Naive thymus-derived CD4-positive, alpha-beta T cell (primary cell): ENCODE measurements at regions of chr1 and their contacts with region 1.

Region 1: GRCh38 chr1:116377541-116378529 is 4.8 kb downstream of the ATP1A1 start:
- DNase-seq: peak in 8 of 9 donors; percentile 40 to 64 (median 56)
- ATAC-seq: peak; percentile 62
- H3K4me3 ChIP-seq: peak overlapping the region; percentile 94
- H3K4me3 Mint-ChIP-seq: peak overlapping the region; percentile 86 to 99 (median 96)
- H3K27ac ChIP-seq: peak overlapping the region; percentile 98
- H3K27ac Mint-ChIP-seq: peak overlapping the region; percentile 82 to 98 (median 94)
- H3K4me1 ChIP-seq: peaks cover 38 to 59% of the 10 kb centered on the region in 2 donors
- H3K4me1 Mint-ChIP-seq: peaks cover 46 to 86% (median 79%) of the 10 kb centered on the region in 7 donors
- H3K27me3 ChIP-seq: no peaks in the 10 kb centered on the region
- H3K27me3 Mint-ChIP-seq: no peaks in the 10 kb centered on the region

Region 2: DNA sequence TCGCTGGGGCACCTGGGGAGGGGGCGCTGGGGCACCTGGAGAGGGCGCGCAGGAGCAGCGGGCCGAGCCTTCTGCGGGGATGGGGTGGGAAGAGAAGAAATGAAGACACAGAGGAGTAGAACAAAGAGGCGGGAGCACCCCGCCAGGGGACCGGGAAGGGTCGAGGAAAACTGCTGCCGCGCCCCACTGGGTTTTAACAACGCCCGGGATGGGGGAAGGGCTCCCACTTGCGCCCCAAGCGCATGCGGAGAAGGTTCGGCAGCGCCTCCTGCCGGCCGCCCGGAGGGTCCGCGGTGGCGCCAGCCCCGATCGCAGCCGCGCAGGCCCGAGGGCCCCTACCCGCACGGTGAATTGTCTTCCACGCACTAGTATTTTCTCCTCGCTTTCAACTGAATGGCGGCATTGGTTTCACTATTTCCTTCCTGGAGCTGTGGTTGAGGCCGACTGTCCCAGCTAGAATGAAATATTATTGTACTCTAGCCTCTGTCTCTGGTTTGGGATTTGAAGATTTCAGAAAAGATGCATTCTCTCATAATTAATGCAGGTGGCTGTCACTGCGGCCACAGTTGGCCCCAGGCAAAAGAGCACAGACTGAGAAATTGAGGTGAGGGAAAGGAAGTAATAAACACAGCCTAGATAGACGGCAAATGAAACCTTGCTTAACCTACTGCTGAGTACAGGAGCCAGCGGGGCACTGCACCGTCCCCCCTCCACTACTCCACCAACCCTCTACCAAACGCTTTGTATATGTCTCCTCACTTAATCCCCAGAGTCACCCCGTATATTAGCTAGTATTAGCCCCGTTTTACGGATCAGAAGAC is 209.3 kb before region 1 on chr1:
- CTCF ChIA-PET with region 1: no interaction called
- POLR2A ChIA-PET with region 1: no interaction called
- intact Hi-C with region 1: loop called in 1 of 2 experiments (anchors 2 kb)
- DNase-seq: peak; percentile 74 to 88 (median 83)
- ATAC-seq: peak; percentile 97
- H3K4me3 ChIP-seq: peak overlapping the region; percentile 75
- H3K4me3 Mint-ChIP-seq: peak overlapping the region; percentile 70 to 90 (median 88)
- H3K27ac ChIP-seq: peak overlapping the region; percentile 60
- H3K27ac Mint-ChIP-seq: peak overlapping the region; percentile 81 to 96 (median 92)
- H3K4me1 ChIP-seq: peaks cover 9% of the 10 kb centered on the region in 2 donors
- H3K4me1 Mint-ChIP-seq: peaks cover 14 to 23% (median 19%) of the 10 kb centered on the region in 7 donors
- H3K27me3 ChIP-seq: no peaks in the 10 kb centered on the region
- H3K27me3 Mint-ChIP-seq: peaks cover 0 to 14% (median 0%) of the 10 kb centered on the region in 5 donors

Region 3: DNA sequence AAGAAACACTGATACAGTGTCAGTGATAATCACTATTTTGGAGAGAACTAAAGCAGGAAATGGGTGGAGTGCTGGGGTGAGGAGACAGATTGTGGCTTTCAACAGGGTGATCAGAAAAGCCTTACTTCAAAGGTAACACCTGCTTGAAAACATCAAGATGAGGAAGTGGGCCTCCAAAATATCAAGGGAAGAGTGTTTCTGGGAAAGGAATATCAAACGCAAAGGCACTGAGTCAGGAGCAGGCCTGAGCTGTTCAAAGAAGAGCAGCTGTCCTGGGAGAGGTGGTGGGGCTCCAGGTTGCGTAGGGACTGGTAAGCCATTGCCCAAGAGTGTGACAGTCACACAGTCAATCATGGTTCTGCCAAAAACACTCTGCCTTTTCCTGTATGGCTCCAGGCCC is 51.9 kb before region 1 on chr1:
- CTCF ChIA-PET with region 1: interaction called, 4 read pairs
- POLR2A ChIA-PET with region 1: interaction called, 103 read pairs
- intact Hi-C with region 1: loop called (anchors 1 kb)
- DNase-seq: peak; percentile 14 to 84 (median 78)
- ATAC-seq: peak; percentile 92
- H3K4me3 ChIP-seq: peak overlapping the region; percentile 38
- H3K4me3 Mint-ChIP-seq: peak overlapping the region; percentile 25 to 83 (median 70)
- H3K27ac ChIP-seq: peak overlapping the region; percentile 73
- H3K27ac Mint-ChIP-seq: peak overlapping the region; percentile 90 to 98 (median 95)
- H3K4me1 ChIP-seq: peaks cover 48 to 88% of the 10 kb centered on the region in 2 donors
- H3K4me1 Mint-ChIP-seq: peaks cover 50 to 100% (median 93%) of the 10 kb centered on the region in 7 donors
- H3K27me3 ChIP-seq: no peaks in the 10 kb centered on the region
- H3K27me3 Mint-ChIP-seq: no peaks in the 10 kb centered on the region

Region 4: DNA sequence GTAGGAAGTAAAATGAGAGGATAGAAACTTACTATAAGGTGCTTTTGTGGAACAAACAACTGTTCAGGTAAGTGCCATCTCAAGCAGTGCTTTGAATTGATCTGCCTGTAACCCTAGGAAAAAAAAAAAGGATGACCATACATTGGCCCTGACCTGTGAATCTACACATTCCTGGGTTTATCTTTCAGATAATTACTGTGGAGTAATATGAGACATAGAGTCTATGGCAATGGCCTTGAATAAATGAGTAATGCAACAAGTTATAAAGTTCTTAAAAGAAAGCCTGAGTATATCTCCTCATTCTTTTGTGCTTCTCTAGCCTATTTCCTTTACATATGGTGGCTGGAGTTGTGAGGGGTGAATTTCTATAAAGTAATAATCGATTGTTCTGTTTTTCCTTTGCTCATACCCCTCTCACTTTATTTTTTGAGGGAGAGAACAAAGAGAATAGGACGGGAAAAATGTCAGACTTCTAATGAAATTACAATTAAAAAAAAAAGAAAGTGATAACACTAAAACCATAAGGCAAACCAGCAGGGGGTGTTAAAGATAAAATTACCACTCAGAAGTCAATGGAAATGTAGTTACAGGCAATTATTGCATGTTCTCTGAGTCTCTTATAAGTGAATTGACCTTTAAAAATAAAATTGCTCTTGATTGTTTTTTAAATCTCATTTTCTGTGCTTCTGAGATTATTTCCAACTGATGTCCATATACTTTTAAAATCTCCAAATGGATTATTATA is 17.2 kb before region 1 on chr1:
- CTCF ChIA-PET with region 1: interaction called, 5 read pairs
- POLR2A ChIA-PET with region 1: interaction called, 13 read pairs
- intact Hi-C with region 1: loop called in 1 of 2 experiments (anchors 1 kb)
- DNase-seq: peak in 3 of 9 donors; percentile 7 to 30 (median 15)
- ATAC-seq: no peak
- H3K4me3 ChIP-seq: no peak overlapping the region
- H3K4me3 Mint-ChIP-seq: no peak overlapping the region
- H3K27ac ChIP-seq: no peak overlapping the region
- H3K27ac Mint-ChIP-seq: peak overlapping the region in 1 of 9 donors; percentile 63
- H3K4me1 ChIP-seq: peaks cover 0 to 13% of the 10 kb centered on the region in 2 donors
- H3K4me1 Mint-ChIP-seq: peaks cover 4 to 55% (median 33%) of the 10 kb centered on the region in 7 donors
- H3K27me3 ChIP-seq: no peaks in the 10 kb centered on the region
- H3K27me3 Mint-ChIP-seq: peaks cover 0 to 24% (median 0%) of the 10 kb centered on the region in 5 donors

Region 5: DNA sequence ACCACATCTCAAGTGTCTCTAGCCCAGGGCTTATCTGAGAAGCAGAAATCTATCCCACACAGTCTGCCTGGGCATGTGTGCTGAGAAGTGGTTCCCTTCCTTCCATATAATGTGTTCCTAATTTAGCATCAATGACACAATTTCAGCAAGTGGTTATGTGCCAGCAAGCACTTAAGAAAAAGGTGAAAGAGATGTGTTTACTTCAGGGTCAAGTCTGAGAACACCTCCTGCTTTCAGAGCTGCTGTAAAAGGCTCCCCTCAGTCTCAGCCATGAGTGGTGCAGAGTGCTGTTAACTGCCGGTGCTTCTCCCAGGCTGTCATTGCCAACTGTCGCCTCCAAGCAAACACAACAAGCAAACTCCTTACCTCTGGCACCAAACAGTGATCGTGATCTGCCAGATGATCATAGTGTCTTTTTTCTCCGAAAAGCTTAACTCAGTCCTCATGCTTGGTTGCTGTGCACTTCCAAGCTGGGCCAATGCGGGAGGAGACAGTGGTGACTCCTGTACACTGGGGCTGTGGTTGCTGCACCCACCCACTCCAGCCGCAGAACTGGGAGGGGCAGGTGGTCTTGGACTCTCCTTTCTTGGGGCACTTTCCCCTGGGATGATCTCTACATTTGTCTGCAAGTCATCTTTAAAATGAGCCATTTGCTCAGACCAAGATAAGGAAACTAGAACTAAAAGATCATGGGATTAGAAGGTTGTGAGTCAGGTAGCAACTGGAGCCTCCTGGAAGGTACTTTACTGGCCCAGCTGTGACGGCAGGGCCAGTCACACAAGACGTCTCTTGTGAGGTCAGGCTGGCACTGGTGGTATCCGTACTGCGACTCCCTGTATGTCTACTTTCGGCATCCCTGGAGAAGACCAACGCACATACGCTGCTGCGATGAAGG is 27.7 kb after region 1 on chr1:
- CTCF ChIA-PET with region 1: interaction called, 3 read pairs
- POLR2A ChIA-PET with region 1: interaction called, 4 read pairs
- intact Hi-C with region 1: loop called in 1 of 2 experiments (anchors 2 kb)
- DNase-seq: no peak
- ATAC-seq: no peak
- H3K4me3 ChIP-seq: no peak overlapping the region
- H3K4me3 Mint-ChIP-seq: no peak overlapping the region
- H3K27ac ChIP-seq: no peak overlapping the region
- H3K27ac Mint-ChIP-seq: peak overlapping the region in 8 of 9 donors; percentile 38 to 83 (median 66)
- H3K4me1 ChIP-seq: peaks cover 3 to 5% of the 10 kb centered on the region in 2 donors
- H3K4me1 Mint-ChIP-seq: peaks cover 13 to 59% (median 34%) of the 10 kb centered on the region in 7 donors
- H3K27me3 ChIP-seq: no peaks in the 10 kb centered on the region
- H3K27me3 Mint-ChIP-seq: no peaks in the 10 kb centered on the region

Region 6: GRCh38 chr1:116433275-116434257 is 55.7 kb after region 1 on chr1:
- CTCF ChIA-PET with region 1: no interaction called
- POLR2A ChIA-PET with region 1: interaction called, 11 read pairs
- intact Hi-C with region 1: loop called in 1 of 2 experiments (anchors 2 kb)
- DNase-seq: no peak
- ATAC-seq: peak; percentile 26
- H3K4me3 ChIP-seq: no peak overlapping the region
- H3K4me3 Mint-ChIP-seq: no peak overlapping the region
- H3K27ac ChIP-seq: no peak overlapping the region
- H3K27ac Mint-ChIP-seq: no peak overlapping the region
- H3K4me1 ChIP-seq: no peaks in the 10 kb centered on the region
- H3K4me1 Mint-ChIP-seq: no peaks in the 10 kb centered on the region
- H3K27me3 ChIP-seq: no peaks in the 10 kb centered on the region
- H3K27me3 Mint-ChIP-seq: peaks cover 0 to 19% (median 0%) of the 10 kb centered on the region in 5 donors

Region 7: GRCh38 chr1:116504308-116505156 is 126.7 kb after region 1 on chr1:
- CTCF ChIA-PET with region 1: no interaction called
- POLR2A ChIA-PET with region 1: no interaction called
- intact Hi-C with region 1: loop called (anchors 2 to 5 kb)
- DNase-seq: peak; percentile 49 to 86 (median 73)
- ATAC-seq: peak; percentile 96
- H3K4me3 ChIP-seq: peak overlapping the region; percentile 1
- H3K4me3 Mint-ChIP-seq: peak overlapping the region in 8 of 10 donors; percentile 11 to 77 (median 48)
- H3K27ac ChIP-seq: peak overlapping the region; percentile 48
- H3K27ac Mint-ChIP-seq: peak overlapping the region; percentile 65 to 92 (median 77)
- H3K4me1 ChIP-seq: peaks cover 20 to 49% of the 10 kb centered on the region in 2 donors
- H3K4me1 Mint-ChIP-seq: peaks cover 21 to 89% (median 34%) of the 10 kb centered on the region in 7 donors
- H3K27me3 ChIP-seq: no peaks in the 10 kb centered on the region
- H3K27me3 Mint-ChIP-seq: no peaks in the 10 kb centered on the region